Calu3 (cell line): ENCODE measurements at regions of chr9 and their contacts with region 1.

Region 1: DNA sequence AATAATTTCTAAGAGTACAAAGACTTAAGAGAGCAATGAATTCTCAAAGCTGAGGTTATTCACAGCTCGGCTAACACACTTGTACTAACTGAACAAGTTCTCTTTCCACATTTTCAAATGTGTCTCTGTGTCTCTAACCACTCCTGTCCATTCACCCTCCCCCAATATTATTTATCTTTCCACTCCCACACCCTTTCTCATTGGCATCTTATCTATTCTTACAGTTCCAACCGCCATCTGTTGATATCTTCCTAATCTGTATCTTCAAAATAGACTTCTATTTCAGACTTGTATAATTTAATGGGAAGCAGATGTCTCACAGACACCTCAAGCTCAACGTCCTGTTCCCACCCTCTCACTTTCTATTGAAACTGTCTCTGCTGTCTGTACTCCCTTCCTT is 205.9 kb downstream of the ANXA1 start:
- DNase-seq: no peak
- H3K4me3 Mint-ChIP-seq: no peak overlapping the region
- H3K27ac Mint-ChIP-seq: no peak overlapping the region
- H3K4me1 Mint-ChIP-seq: peaks cover 7% of the 10 kb centered on the region
- H3K27me3 Mint-ChIP-seq: no peaks in the 10 kb centered on the region
- CTCF ChIP-seq: no peak

Region 2: GRCh38 chr9:72812559-72813111 is 545.0 kb before region 1 on chr9:
- CTCF ChIA-PET with region 1: no interaction called
- intact Hi-C with region 1: no loop called
- DNase-seq: no peak
- H3K4me3 Mint-ChIP-seq: no peak overlapping the region
- H3K27ac Mint-ChIP-seq: no peak overlapping the region
- H3K4me1 Mint-ChIP-seq: no peaks in the 10 kb centered on the region
- H3K27me3 Mint-ChIP-seq: no peaks in the 10 kb centered on the region
- CTCF ChIP-seq: no peak

Region 3: GRCh38 chr9:73294336-73294735 is 63.3 kb before region 1 on chr9:
- CTCF ChIA-PET with region 1: no interaction called
- intact Hi-C with region 1: loop called (anchors 2 kb)
- DNase-seq: no peak
- H3K4me3 Mint-ChIP-seq: no peak overlapping the region
- H3K27ac Mint-ChIP-seq: no peak overlapping the region
- H3K4me1 Mint-ChIP-seq: no peaks in the 10 kb centered on the region
- H3K27me3 Mint-ChIP-seq: no peaks in the 10 kb centered on the region
- CTCF ChIP-seq: no peak